ENCODE measurements at regions of chr5 and their contacts with region 1.

Region 1: DNA sequence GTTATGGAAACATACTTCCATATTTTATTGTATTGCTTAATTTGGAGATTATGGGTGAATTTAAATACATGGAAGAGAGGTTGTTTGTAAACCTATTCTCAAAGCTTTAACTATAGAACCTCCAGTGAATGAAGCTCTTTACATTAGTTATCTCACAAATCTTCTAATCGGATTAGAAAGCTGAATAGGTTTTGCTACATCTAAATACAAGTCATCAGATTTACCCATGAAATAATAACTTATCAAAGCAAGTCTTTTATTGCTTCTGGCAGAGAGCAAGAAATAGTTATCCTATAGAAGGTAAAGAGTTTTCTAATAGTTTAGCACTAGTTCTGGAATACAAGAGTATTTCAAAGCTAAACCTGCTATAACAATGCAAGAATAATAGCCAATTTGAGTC is 104.4 kb upstream of the SREK1 start:
- DNase-seq: no peak
- H3K4me3 ChIP-seq: no peak overlapping the region
- CTCF ChIP-seq: no peak
- POLR2A ChIP-seq: no peak

Region 2: GRCh38 chr5:65611524-65611923 is 428.2 kb before region 1 on chr5:
- intact Hi-C with region 1: no loop called
- DNase-seq: no peak
- H3K4me3 ChIP-seq: no peak overlapping the region
- CTCF ChIP-seq: no peak
- POLR2A ChIP-seq: no peak

Region 3: DNA sequence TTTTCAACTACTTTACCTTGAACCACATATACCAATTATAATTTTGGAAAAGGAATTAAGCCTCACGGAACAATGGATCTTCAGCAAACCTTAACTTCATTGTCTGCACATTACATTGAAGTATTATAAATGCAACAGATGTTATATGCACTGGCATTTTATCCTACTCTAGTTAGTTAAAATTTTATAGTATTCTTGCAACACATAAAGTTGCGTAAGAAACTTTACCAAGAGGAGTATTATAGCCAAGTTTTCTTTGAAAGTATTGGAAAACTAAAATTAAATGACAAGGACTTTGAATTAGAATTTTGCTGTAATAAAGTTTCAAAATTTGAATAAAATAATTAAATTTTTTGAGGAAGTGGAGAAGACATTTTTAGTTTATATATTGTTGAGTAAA is 41.0 kb after region 1 on chr5:
- intact Hi-C with region 1: loop called (anchors 1 kb)
- DNase-seq: no peak
- H3K4me3 ChIP-seq: no peak overlapping the region
- CTCF ChIP-seq: no peak
- POLR2A ChIP-seq: no peak

Measured in lower leg skin (tissue), 4 donors.